ENCODE measurements at regions of chr2 and their contacts with region 1.

Region 1: DNA sequence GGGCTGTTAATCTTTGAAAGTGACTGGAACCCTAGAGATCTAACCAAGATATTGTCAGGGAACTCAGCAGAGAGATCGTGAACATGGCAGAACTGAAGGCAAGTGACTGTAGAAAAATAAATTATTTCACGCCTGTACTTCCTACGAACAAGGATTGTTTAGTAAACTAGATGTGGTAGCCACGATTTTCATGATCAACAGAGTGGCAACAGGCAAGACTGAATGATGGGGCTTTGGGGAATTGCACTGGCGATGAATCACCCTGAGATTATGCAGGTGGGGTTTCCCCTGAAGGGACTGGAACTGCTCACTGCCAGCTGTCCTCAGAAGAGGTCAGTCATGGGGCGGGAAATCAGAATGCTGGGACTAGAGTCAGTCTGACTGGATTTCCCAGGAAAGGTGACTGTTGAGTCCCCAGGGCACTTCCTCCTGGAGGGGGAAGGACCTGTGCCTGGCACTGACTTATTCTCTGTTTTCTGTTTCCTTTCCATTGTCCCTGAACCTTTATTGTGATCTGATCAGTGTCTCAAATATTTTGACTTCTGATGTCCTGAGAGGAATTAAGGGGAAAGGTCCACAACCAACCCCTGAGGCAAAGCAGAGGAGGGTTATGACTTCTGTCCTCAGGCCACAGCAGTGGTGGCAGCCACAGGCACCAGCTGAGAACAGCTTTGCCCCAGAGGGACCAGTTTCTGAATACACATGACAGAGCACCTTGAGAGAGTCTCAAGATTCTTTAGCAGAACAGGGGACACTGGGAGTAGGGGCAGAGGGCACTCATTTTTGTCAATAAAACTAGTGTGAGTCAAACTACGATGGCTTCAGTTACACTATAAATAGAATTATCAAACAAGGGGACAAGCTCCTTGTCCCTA is 70.0 kb downstream of the NAB1 start:
- DNase-seq: no peak
- H3K4me3 Mint-ChIP-seq: peak overlapping the region; percentile 28
- H3K27ac Mint-ChIP-seq: peak overlapping the region; percentile 92
- H3K4me1 Mint-ChIP-seq: peaks cover 75% of the 10 kb centered on the region
- H3K27me3 Mint-ChIP-seq: no peaks in the 10 kb centered on the region

Region 2: DNA sequence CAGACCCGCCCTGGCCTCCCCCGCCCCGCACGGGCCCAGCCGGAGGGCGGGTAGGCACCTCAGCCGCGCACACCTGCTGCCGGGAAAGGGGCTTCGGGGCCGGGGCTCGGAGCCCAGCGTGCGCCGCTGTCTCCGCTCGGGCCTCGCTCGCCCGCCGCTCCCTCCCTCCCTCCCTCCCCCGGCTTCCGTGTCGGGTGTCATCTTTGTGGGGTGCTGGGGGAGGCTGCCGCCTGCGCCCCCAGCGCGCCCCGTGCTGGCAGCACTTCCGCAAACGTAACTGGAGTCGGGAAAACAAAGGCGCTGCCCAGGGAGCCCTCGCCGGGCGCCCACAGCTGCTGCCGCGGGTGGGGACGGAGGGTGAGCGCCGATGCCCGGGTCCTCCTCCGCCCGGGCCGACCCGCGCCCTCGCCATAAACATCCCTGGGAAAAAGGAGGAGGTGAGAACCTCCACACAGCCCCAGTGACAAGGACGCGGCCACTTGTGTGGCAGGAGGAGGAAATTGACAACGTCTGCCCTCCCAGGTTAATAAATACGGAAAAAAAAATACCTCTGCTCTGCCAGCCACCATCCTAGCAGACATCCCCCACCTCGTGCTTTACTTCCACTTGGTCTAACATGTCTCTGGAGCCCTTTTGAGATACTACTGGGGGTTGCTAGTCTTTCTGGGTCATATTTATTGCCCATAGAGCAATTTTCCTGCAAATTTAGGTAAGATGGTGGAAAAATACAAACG is 310.2 kb before region 1 on chr2:
- intact Hi-C with region 1: loop called (anchors 1 kb)
- DNase-seq: peak; percentile 61
- H3K4me3 Mint-ChIP-seq: peak overlapping the region; percentile 86
- H3K27ac Mint-ChIP-seq: peak overlapping the region; percentile 91
- H3K4me1 Mint-ChIP-seq: peaks cover 36% of the 10 kb centered on the region
- H3K27me3 Mint-ChIP-seq: no peaks in the 10 kb centered on the region

Region 3: GRCh38 chr2:190679813-190680591 is 38.9 kb before region 1 on chr2:
- intact Hi-C with region 1: loop called (anchors 1 kb)
- DNase-seq: peak; percentile 29
- H3K4me3 Mint-ChIP-seq: peak overlapping the region; percentile 51
- H3K27ac Mint-ChIP-seq: peak overlapping the region; percentile 92
- H3K4me1 Mint-ChIP-seq: peaks cover 45% of the 10 kb centered on the region
- H3K27me3 Mint-ChIP-seq: no peaks in the 10 kb centered on the region

Region 4: GRCh38 chr2:190759749-190760213 is 40.9 kb after region 1 on chr2:
- intact Hi-C with region 1: loop called (anchors 1 kb)
- DNase-seq: no peak
- H3K4me3 Mint-ChIP-seq: no peak overlapping the region
- H3K27ac Mint-ChIP-seq: peak overlapping the region; percentile 38
- H3K4me1 Mint-ChIP-seq: peaks cover 51% of the 10 kb centered on the region
- H3K27me3 Mint-ChIP-seq: no peaks in the 10 kb centered on the region

Region 5: GRCh38 chr2:190880378-190881073 is 161.6 kb after region 1 on chr2 and contains the start of gene GLS:
- intact Hi-C with region 1: loop called (anchors 1 kb)
- DNase-seq: peak; percentile 95
- H3K4me3 Mint-ChIP-seq: peak within 1 kb of the TSS; percentile 91
- H3K27ac Mint-ChIP-seq: peak within 1 kb of the TSS; percentile 97
- H3K4me1 Mint-ChIP-seq: peaks cover 35% of the 10 kb centered on the region
- H3K27me3 Mint-ChIP-seq: no peaks in the 10 kb centered on the region
- total RNA-seq, gene GLS: 195 and 201 TPM in 2 replicates

Region 6: GRCh38 chr2:191114403-191114886 is 395.6 kb after region 1 on chr2:
- intact Hi-C with region 1: loop called (anchors 1 kb)
- DNase-seq: peak; percentile 40
- H3K4me3 Mint-ChIP-seq: peak overlapping the region; percentile 64
- H3K27ac Mint-ChIP-seq: peak overlapping the region; percentile 94
- H3K4me1 Mint-ChIP-seq: peaks cover 76% of the 10 kb centered on the region
- H3K27me3 Mint-ChIP-seq: no peaks in the 10 kb centered on the region

Measured in activated T-helper 2 cell treated with anti-CD3 and anti-CD28 coated beads, Interferon-gamma antibody, Interleukin-2, Interleukin-4, amounts not matched to agents 10 μg/mL and 5 μg/mL and 100 μg/mL, durations not matched to agents 14 hours and 24 hours and 36 hours (primary cell).